Activated CD8-positive, alpha-beta T cell treated with anti-CD3 and anti-CD28 coated beads, Interleukin-2, amount 10 ng/mL, durations not matched to agents 7 days and 5 days (primary cell): ENCODE measurements at regions of chr5 and their contacts with region 1.

Region 1: DNA sequence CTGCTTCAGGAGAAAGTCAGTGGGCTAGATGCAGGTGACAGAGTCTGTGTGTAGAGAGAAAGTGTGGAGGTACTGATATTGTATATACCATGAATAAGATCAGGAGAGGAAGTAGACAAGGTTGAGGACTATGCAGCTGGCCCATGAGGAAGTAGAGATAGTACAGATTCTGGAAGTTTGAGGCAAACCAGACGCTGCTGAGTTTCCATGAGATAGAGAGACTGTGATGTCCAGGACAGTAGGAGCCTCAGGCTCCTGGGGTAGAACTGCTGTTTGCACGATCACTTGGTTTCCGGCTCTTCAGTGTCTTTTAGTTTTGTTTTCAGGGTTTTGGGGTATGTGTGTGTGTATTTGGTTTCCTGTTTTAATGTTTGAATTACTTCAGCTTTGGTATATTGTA is 13.6 kb downstream of the OTULINL start:
- DNase-seq: peak; percentile 75
- ATAC-seq: peak; percentile 79
- H3K4me3 Mint-ChIP-seq: peak overlapping the region; percentile 66
- H3K27ac Mint-ChIP-seq: peak overlapping the region; percentile 97
- H3K4me1 Mint-ChIP-seq: peaks cover 91% of the 10 kb centered on the region
- H3K27me3 Mint-ChIP-seq: no peaks in the 10 kb centered on the region

Region 2: DNA sequence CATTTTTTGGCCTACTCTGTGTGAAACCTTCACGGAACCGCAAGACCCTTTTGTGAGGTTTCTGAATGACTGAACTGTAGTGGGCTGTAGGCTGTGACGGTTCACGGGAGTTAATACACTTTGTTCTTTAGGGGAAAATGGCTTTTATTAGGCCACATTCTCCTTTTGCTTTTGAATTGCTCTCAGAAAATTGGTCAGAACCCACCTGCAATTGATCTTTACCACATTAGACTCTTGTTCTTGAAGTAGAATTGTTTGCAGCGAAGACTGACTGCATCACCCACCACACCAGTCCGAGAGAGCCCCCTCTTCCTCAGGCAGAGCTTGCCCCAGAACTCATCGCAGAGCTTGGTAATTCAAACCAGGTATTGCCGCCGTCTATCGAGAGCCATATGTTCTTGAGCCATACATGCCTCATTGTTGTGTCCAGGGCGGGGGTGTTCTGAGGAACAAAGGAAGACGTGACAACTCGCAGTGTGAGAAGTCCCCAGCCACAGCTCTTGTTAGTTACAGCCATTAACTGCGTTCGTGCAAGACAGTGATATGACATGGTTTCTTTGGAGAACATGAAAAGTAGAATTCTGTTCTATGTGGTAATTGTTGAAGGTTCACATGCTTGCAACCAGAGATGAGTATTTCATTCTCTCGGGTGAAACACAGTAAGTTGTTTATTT is 180.0 kb before region 1 on chr5:
- CTCF ChIA-PET with region 1: interaction called, 6 read pairs
- POLR2A ChIA-PET with region 1: interaction called, 43 read pairs
- DNase-seq: peak; percentile 60
- ATAC-seq: peak; percentile 59
- H3K4me3 Mint-ChIP-seq: peak overlapping the region; percentile 71
- H3K27ac Mint-ChIP-seq: peak overlapping the region; percentile 94
- H3K4me1 Mint-ChIP-seq: peaks cover 63% of the 10 kb centered on the region
- H3K27me3 Mint-ChIP-seq: no peaks in the 10 kb centered on the region

Region 3: GRCh38 chr5:14581333-14581890 is 13.8 kb before region 1 on chr5 and contains the start of gene OTULINL:
- CTCF ChIA-PET with region 1: interaction called, 56 read pairs
- POLR2A ChIA-PET with region 1: interaction called, 95 read pairs
- DNase-seq: peak; percentile 91
- ATAC-seq: peak; percentile 91
- H3K4me3 Mint-ChIP-seq: peak within 1 kb of the TSS; percentile 84
- H3K27ac Mint-ChIP-seq: peak within 1 kb of the TSS; percentile 87
- H3K4me1 Mint-ChIP-seq: peaks cover 43% of the 10 kb centered on the region
- H3K27me3 Mint-ChIP-seq: peaks cover 15% of the 10 kb centered on the region
- total RNA-seq, gene OTULINL: 59.6 to 68.3 TPM